WTC11 (cell line): ENCODE measurements at regions of chr7 and their contacts with region 1.

Region 1: DNA sequence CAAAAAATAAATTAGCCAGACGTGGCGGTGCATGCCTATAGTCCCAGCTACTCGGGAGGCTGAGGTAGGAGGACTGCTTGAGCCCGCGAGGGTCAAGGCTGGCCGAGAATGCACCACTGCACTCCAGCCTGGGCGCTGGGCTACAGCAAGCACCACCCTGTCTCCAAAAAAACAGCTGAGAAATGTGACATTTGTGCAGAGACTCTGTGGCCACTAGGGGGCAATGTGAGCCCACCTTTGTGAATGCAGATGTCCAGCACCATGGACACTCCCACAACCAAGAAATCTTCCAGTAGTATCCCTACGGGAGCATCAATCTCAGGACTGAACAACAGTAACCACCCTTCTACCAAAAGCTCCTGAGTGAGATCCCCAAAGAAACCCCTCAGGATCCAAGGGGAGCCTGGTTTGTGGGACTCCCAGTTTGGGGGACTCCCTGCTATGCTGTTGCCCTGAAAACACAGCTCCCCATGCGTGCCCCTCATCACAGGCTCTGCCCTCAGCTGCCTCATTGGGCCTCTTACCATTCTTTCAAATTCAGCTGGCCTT is 6.2 kb upstream of the AHCYL2 start:
- DNase-seq: peak; percentile 91
- ATAC-seq: peak; percentile 80
- H3K4me3 Mint-ChIP-seq: no peak overlapping the region
- H3K27ac Mint-ChIP-seq: no peak overlapping the region
- H3K4me1 Mint-ChIP-seq: 0 out of 2 replicates have a peak, but pooled peaks cover 5% of the 10 kb centered on the region
- H3K27me3 Mint-ChIP-seq: no peaks in the 10 kb centered on the region; the same call in 1 of the 2 replicates
- CTCF ChIP-seq: peak; percentile 95

Region 2: GRCh38 chr7:128841921-128842651 is 376.5 kb before region 1 on chr7:
- CTCF ChIA-PET with region 1: no interaction called
- POLR2A ChIA-PET with region 1: no interaction called
- DNase-seq: peak; percentile 78
- ATAC-seq: peak; percentile 71
- H3K4me3 Mint-ChIP-seq: peak overlapping the region; percentile 40; the same call in 1 of the 2 replicates
- H3K27ac Mint-ChIP-seq: no peak overlapping the region; the same call in 1 of the 2 replicates
- H3K4me1 Mint-ChIP-seq: peaks cover 8% of the 10 kb centered on the region
- H3K27me3 Mint-ChIP-seq: no peaks in the 10 kb centered on the region; the same call in 1 of the 2 replicates
- CTCF ChIP-seq: peak; percentile 98

Region 3: DNA sequence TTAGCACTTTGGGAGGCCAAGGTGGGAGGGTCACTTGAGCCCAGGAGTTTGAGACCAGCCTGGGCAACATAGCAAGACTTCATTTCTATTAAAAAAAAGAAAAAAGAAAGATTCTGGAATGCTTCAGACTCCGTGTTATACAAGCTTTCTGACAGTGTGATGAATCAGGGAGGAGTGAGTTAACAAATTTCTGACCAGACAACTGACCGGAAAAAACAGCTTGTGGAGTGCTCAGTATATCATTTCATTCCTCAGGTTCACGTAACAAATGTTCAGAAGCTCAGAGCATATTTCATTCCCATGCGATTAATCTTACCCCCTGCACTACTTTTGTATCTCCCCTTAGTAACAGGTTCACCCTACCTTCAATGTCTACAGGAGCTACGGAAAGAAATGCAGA is 135.1 kb before region 1 on chr7:
- CTCF ChIA-PET with region 1: interaction called, 10 read pairs
- POLR2A ChIA-PET with region 1: no interaction called
- DNase-seq: no peak
- ATAC-seq: no peak
- H3K4me3 Mint-ChIP-seq: no peak overlapping the region
- H3K27ac Mint-ChIP-seq: no peak overlapping the region
- H3K4me1 Mint-ChIP-seq: no peaks in the 10 kb centered on the region
- H3K27me3 Mint-ChIP-seq: no peaks in the 10 kb centered on the region
- CTCF ChIP-seq: no peak

Region 4: DNA sequence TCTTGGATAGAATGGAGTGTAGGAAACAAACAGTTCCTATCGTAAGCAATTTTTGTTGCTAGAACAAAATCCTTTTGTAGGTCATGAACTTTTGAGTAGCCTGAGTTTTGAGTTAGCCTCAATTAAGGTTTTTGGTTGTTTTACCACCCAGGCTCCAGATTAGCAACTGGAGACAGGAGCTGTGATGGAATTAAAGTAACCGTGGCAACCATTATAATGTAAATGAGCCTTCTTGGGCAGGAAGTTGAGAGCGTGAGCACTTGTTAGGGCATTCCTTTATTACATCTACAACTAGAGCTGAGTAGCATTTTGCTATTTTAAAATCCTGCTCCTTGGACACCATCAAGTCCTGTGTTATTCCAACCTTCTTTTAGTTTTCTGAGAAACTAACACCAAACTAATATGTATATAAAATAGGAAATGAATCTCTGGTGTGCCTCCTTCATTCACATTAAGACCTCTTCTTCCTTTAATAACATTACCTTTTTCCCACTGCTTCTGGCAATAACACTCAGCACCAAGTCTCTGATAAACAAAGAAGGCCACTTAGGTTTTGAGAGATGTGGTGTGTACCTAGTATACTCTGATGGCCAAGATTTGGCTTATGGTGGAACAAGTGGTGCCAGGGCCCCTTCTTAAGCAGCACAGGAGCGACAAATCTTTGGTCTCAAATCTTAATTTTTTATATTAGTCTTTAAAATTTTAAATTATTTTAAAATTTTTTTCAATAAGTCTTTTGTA is 40.2 kb after region 1 on chr7:
- CTCF ChIA-PET with region 1: interaction called, 16 read pairs
- POLR2A ChIA-PET with region 1: no interaction called
- DNase-seq: no peak
- ATAC-seq: peak; percentile 97
- H3K4me3 Mint-ChIP-seq: peak overlapping the region; percentile 44
- H3K27ac Mint-ChIP-seq: peak overlapping the region; percentile 96
- H3K4me1 Mint-ChIP-seq: peaks cover 62% of the 10 kb centered on the region
- H3K27me3 Mint-ChIP-seq: no peaks in the 10 kb centered on the region
- CTCF ChIP-seq: no peak

Region 5: DNA sequence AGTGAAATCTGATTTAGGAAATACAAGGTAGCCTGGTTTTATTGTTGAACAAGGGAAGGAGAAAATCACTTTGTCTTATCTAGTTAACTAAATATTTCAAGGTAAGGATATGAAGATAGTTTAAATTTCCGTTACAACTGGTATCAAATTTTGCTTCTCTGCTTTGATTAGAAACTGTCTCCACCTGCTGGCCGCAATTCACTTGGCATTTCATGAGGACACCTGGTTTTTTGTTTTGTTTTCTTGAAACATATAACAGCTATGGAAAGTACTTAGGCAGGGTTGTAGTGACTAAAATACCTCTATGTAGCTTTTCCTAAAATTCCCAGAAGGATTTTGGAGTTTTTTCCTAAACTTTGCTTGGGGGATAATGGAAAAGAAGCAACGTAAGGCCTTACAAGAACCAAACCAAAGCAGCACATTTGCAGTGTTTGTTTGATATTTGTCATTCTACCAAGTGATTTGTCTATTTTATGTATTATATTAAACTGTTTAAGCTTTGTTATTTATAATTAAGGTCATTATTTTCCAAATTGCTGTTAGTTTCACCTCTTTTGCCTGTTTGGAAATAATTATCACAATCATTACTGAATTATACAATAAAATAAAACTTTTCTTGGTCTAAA is 79.8 kb after region 1 on chr7:
- CTCF ChIA-PET with region 1: interaction called, 42 read pairs
- POLR2A ChIA-PET with region 1: no interaction called
- DNase-seq: peak; percentile 50
- ATAC-seq: no peak
- H3K4me3 Mint-ChIP-seq: no peak overlapping the region
- H3K27ac Mint-ChIP-seq: no peak overlapping the region
- H3K4me1 Mint-ChIP-seq: no peaks in the 10 kb centered on the region
- H3K27me3 Mint-ChIP-seq: no peaks in the 10 kb centered on the region
- CTCF ChIP-seq: peak; percentile 48; the same call in 1 of the 2 replicates

Region 6: DNA sequence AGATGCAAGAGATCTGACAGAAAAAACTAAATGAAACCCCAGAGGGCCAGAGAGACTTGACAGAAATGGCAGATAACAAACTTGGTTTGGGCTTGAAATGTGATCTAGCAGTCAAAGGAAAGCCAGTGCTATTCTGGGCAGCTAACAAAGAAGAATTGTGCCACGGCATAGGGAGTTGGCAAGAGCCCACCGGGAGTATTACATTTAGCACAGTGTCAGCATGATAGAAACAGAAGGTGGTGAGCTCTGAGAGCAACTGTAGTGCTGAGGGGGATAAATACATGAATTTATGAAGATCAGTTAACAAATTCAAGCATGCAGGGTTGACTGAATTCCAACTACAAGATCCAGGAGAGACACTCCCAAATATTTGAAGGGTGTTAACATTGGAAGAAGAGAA is 97.4 kb after region 1 on chr7:
- CTCF ChIA-PET with region 1: no interaction called
- POLR2A ChIA-PET with region 1: no interaction called
- DNase-seq: no peak
- ATAC-seq: no peak
- H3K4me3 Mint-ChIP-seq: no peak overlapping the region
- H3K27ac Mint-ChIP-seq: no peak overlapping the region
- H3K4me1 Mint-ChIP-seq: no peaks in the 10 kb centered on the region; the same call in none of the 2 replicates
- H3K27me3 Mint-ChIP-seq: no peaks in the 10 kb centered on the region
- CTCF ChIP-seq: no peak

Region 7: DNA sequence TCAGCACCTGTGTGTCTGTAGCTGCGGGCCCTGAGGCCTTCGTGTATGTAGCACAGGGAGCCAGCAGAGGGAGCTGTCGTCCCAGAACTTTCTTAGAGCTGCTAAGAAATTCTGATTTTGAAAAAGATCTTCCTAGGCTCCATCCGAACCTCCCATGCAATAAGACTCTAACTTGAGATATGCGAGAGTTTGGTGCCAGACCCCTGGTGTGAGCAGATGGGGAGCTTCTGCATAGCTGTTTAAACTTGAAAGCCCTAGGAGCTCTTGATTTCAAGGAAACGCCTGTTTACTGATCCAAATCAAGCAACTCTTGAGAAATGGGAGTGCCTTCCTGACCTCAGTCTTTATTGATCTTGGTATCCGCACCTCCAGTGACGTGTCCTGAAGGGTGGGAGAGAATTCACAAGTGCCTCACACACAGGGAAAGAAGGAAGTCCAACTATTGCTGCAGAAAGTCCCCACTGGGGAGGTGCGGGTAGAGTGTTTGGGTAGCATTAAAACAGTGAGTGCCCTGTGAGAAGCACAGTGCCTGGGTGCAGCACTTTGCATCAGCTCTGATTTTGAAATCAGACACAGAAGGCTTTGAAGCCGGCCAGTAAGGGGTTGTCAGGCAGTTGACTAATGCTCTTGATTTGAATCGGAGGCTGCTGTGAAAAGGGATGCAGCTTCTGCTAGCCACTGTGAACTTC is 149.3 kb after region 1 on chr7:
- CTCF ChIA-PET with region 1: interaction called, 25 read pairs
- POLR2A ChIA-PET with region 1: no interaction called
- DNase-seq: peak; percentile 86
- ATAC-seq: peak; percentile 96
- H3K4me3 Mint-ChIP-seq: no peak overlapping the region
- H3K27ac Mint-ChIP-seq: peak overlapping the region; percentile 89
- H3K4me1 Mint-ChIP-seq: peaks cover 37% of the 10 kb centered on the region
- H3K27me3 Mint-ChIP-seq: no peaks in the 10 kb centered on the region
- CTCF ChIP-seq: peak; percentile 81

Region 8: DNA sequence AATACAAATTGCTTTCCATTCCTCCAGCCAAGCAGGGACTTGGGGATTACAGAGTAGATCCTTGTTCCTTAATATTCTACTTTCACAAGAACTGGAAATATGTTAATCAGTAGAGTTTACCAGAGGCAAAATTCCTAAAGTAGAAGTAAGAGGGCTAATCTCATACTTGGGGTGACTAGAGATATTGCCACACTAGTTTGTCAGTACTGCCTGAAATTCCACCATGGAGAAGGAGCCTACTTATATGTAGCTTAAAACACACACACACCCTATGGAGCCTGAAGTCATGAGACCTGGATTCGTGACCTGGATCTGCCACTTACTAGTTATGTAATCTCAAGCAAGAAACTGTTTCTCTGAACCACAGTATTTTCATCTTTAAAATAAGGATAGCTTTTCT is 249.5 kb after region 1 on chr7:
- CTCF ChIA-PET with region 1: interaction called, 41 read pairs
- POLR2A ChIA-PET with region 1: no interaction called
- DNase-seq: no peak
- ATAC-seq: no peak
- H3K4me3 Mint-ChIP-seq: no peak overlapping the region
- H3K27ac Mint-ChIP-seq: no peak overlapping the region
- H3K4me1 Mint-ChIP-seq: peaks cover 21% of the 10 kb centered on the region
- H3K27me3 Mint-ChIP-seq: no peaks in the 10 kb centered on the region
- CTCF ChIP-seq: no peak